ENCODE measurements at regions of chr20 and their contacts with region 1.

Region 1: GRCh38 chr20:31723319-31724078 is 831 bp upstream of the BCL2L1 start:
- DNase-seq: peak; percentile 99
- H3K4me3 ChIP-seq: peak overlapping the region; percentile 73 to 89 (median 82)
- H3K27ac ChIP-seq: peak overlapping the region; percentile 93 to 99 (median 96)
- H3K4me1 ChIP-seq: peaks cover 12 to 38% (median 31%) of the 10 kb centered on the region in 4 donors
- H3K27me3 ChIP-seq: no peaks in the 10 kb centered on the region
- CTCF ChIP-seq: peak; percentile 95 to 98 (median 98)
- EP300 ChIP-seq: no peak
- POLR2A ChIP-seq: peak; percentile 64

Region 2: DNA sequence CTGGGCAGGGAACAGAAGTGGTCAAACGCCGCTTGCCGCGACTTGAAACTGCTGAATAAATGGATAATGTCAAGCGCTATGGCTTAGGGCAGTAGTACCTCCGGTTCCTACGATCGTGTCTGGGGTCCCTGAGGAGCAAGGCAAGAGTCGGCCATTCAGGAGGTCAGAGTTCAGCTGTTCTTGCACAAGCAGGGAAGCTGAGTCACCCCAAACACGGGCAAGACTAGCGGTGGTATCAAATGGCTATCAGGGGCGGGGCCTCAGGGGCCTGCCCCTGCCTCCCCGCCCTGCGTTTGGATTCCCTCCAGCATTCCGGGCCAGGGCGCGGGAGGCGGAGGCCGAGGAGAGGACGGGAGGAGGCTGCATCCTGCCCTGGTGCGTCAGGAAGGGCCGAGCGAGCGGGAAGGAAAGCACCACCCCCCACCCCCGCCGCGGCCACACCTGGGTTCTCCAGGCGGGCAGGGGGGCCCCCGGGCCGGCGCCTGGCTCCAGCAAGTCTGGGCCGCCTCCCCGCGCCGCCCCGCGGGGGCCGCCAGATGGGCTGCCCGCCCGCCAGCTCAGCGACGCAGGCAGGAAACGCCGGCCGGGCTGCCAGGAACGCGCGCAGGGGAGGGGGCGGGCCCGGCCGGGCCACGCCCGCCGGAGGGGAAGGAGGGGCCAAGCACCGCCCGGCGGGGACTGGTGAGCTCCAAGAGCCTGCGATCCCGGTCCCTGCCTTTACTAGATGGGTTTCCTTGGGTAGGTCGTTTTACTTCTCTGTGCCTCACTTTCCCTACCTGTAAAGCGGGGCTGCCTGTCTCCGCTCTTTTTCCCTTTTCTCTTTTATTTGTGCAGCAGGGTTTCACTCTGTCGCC is 150.6 kb before region 1 on chr20:
- intact Hi-C with region 1: loop called (anchors 5 kb)
- DNase-seq: peak; percentile 99
- H3K4me3 ChIP-seq: peak overlapping the region; percentile 53 to 61 (median 60)
- H3K27ac ChIP-seq: peak overlapping the region; percentile 91 to 95 (median 93)
- H3K4me1 ChIP-seq: peaks cover 46 to 60% (median 59%) of the 10 kb centered on the region in 4 donors
- H3K27me3 ChIP-seq: no peaks in the 10 kb centered on the region
- CTCF ChIP-seq: peak in 1 of 3 experiments; percentile 4
- EP300 ChIP-seq: peak; percentile 82
- POLR2A ChIP-seq: peak; percentile 43

Region 3: DNA sequence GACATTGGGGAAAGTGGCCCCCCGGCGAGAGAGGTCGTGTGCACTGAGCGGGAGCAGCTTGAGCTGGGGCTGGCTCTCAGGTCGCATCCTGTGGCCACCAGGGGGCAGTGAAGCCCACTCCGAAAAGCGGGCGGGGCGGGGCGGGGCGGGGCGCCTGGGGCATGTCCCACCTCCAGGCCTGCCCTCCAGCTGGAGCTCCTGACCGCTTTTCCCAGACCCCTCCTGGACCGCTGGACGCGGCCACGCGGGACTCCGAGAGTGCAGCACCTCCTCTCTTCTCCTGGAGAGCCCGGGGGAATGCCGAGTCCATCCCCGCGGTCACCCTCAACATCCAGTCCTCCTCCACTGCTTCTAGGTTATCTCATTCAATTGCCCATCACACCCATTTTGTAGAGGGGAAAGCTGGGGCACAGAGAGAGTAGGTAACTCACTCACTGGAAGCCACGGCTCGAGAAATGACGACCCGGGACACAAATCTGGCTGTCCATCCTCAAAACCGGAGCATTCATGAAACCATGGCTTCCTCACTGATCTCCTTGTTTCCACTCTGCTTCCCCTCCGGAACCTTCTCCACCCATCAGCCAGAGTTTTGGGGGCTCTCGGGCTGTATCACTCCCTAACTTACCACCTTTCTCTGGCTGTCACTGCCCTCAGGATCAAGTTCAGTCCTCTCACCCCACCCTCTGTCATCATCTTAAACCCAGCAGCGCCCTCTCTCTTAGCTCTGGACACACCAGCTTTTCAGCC is 61.7 kb before region 1 on chr20:
- intact Hi-C with region 1: loop called (anchors 1 kb)
- DNase-seq: peak; percentile 95
- H3K4me3 ChIP-seq: peak overlapping the region; percentile 28 to 50 (median 47)
- H3K27ac ChIP-seq: peak overlapping the region; percentile 42 to 73 (median 66)
- H3K4me1 ChIP-seq: peaks cover 43 to 52% (median 50%) of the 10 kb centered on the region in 4 donors
- H3K27me3 ChIP-seq: no peaks in the 10 kb centered on the region
- CTCF ChIP-seq: peak; percentile 71 to 89 (median 82)
- EP300 ChIP-seq: no peak
- POLR2A ChIP-seq: no peak

Measured in esophagus muscularis mucosa (tissue), 4 donors.